ENCODE measurements at regions of chr2 and their contacts with region 1.

Region 1: GRCh38 chr2:55111570-55112228 is 61.4 kb upstream of the RTN4 start:
- DNase-seq: peak in 3 of 14 experiments; percentile 11 to 68 (median 56)
- ATAC-seq: no peak
- H3K4me3 ChIP-seq: no peak overlapping the region
- H3K4me3 Mint-ChIP-seq: no peak overlapping the region
- H3K27ac ChIP-seq: no peak overlapping the region
- H3K27ac Mint-ChIP-seq: no peak overlapping the region
- H3K4me1 ChIP-seq: no peaks in the 10 kb centered on the region
- H3K4me1 Mint-ChIP-seq: no peaks in the 10 kb centered on the region
- H3K27me3 ChIP-seq: no peaks in the 10 kb centered on the region
- H3K27me3 Mint-ChIP-seq: no peaks in the 10 kb centered on the region
- CTCF ChIP-seq: no peak

Region 2: DNA sequence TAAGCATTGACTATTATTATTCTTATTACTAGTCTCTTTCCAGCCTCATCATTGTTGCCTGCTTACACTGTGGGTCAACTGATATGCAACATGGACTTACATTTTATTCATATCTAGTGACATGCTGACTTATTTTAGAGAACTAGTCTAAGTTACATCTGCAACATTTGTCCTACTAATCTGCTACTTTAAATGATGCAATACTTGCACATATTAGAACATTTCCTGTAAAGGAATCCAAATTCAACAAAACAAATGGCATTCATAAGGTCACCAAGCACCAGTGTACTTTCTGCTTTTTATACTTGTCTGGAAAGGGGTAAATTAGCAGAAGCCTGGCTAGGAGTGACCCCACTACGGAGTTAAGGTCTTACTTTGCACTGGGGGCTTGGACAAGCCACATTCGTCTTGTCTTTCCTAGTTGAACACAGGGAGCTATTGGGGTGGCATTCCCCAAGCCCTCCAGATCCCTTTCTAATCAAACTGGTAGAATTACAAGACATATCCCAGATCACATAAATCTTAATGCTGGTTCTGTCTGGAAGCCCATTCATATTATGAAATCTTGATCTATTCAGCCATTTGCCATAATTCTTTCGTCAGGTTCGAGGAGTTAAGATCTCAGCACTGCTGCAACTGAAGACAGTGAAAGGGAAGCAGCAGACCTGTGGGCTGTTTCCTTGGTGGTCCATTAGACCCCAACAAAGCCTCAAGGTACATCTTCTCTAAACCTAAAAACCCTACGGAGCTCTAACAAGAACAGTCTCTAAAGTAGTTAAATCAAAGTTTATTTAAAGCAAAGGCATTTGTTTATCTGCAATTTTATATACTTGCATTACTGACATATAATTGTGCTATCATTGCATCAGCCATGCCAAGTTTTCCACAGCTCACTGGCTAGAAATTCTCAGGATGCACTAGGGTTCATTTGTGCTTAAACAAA is 11.6 kb before region 1 on chr2:
- CTCF ChIA-PET with region 1: no interaction called
- POLR2A ChIA-PET with region 1: no interaction called
- intact Hi-C with region 1: loop called in 1 of 2 experiments (anchors 2 kb)
- DNase-seq: no peak
- ATAC-seq: no peak
- H3K4me3 ChIP-seq: no peak overlapping the region
- H3K4me3 Mint-ChIP-seq: no peak overlapping the region
- H3K27ac ChIP-seq: no peak overlapping the region
- H3K27ac Mint-ChIP-seq: no peak overlapping the region
- H3K4me1 ChIP-seq: no peaks in the 10 kb centered on the region
- H3K4me1 Mint-ChIP-seq: no peaks in the 10 kb centered on the region
- H3K27me3 ChIP-seq: no peaks in the 10 kb centered on the region
- H3K27me3 Mint-ChIP-seq: no peaks in the 10 kb centered on the region
- CTCF ChIP-seq: no peak

Region 3: GRCh38 chr2:55123851-55124269 is 12.2 kb after region 1 on chr2:
- CTCF ChIA-PET with region 1: no interaction called
- POLR2A ChIA-PET with region 1: no interaction called
- intact Hi-C with region 1: no loop called
- DNase-seq: no peak
- ATAC-seq: no peak
- H3K4me3 ChIP-seq: no peak overlapping the region
- H3K4me3 Mint-ChIP-seq: no peak overlapping the region
- H3K27ac ChIP-seq: no peak overlapping the region
- H3K27ac Mint-ChIP-seq: no peak overlapping the region
- H3K4me1 ChIP-seq: no peaks in the 10 kb centered on the region
- H3K4me1 Mint-ChIP-seq: no peaks in the 10 kb centered on the region
- H3K27me3 ChIP-seq: no peaks in the 10 kb centered on the region
- H3K27me3 Mint-ChIP-seq: no peaks in the 10 kb centered on the region
- CTCF ChIP-seq: no peak

Region 4: GRCh38 chr2:55751966-55752365 is 640.3 kb after region 1 on chr2:
- CTCF ChIA-PET with region 1: no interaction called
- POLR2A ChIA-PET with region 1: no interaction called
- intact Hi-C with region 1: no loop called
- DNase-seq: no peak
- ATAC-seq: no peak
- H3K4me3 ChIP-seq: no peak overlapping the region
- H3K4me3 Mint-ChIP-seq: no peak overlapping the region
- H3K27ac ChIP-seq: no peak overlapping the region
- H3K27ac Mint-ChIP-seq: no peak overlapping the region
- H3K4me1 ChIP-seq: no peaks in the 10 kb centered on the region
- H3K4me1 Mint-ChIP-seq: no peaks in the 10 kb centered on the region
- H3K27me3 ChIP-seq: no peaks in the 10 kb centered on the region
- H3K27me3 Mint-ChIP-seq: peaks cover 11% of the 10 kb centered on the region
- CTCF ChIP-seq: no peak

Measured in CD4-positive, alpha-beta T cell (primary cell).